HEK293 (cell line): ENCODE measurements at regions of chr1 and their contacts with region 1.

Region 1: DNA sequence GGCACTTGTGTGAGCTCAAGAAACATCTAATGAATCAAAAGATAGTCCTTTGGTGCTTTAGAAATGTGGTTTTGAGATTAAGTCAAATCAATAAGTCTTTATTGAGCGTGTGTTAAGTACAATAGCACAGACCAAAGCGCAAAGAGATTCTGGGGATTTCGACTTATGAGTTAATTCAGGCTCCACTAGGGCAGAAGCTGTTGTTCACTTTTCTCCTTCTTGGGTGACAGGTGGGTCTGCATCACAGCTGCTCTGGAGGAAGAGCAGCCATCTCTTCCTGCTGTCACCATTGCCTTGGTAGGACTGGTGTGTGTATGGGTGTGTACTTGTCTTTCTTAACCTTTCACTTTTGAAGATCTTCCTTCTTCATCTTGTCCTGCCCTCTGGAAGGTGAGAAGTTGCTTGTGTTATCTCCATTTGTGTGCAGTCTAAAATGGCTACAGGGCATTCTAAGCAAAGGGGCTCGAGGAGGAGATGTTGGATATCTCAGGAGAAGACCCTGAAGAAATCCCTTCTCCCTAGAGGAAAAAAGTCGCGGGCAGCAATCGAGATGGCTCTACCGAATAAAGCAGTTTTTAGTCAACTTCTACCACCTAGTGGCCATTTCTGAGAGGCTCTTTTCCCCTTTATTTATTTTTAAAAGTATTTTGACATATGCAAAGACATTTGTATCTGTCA is 22.9 kb upstream of the DISC1 start:
- H3K4me3 ChIP-seq: peak overlapping the region; percentile 42
- H3K27ac ChIP-seq: no peak overlapping the region; the same call in 1 of the 2 replicates
- H3K4me1 ChIP-seq: peaks cover 26% of the 10 kb centered on the region; the same call in 1 of the 2 replicates
- CTCF ChIP-seq: peak; percentile 54

Region 2: DNA sequence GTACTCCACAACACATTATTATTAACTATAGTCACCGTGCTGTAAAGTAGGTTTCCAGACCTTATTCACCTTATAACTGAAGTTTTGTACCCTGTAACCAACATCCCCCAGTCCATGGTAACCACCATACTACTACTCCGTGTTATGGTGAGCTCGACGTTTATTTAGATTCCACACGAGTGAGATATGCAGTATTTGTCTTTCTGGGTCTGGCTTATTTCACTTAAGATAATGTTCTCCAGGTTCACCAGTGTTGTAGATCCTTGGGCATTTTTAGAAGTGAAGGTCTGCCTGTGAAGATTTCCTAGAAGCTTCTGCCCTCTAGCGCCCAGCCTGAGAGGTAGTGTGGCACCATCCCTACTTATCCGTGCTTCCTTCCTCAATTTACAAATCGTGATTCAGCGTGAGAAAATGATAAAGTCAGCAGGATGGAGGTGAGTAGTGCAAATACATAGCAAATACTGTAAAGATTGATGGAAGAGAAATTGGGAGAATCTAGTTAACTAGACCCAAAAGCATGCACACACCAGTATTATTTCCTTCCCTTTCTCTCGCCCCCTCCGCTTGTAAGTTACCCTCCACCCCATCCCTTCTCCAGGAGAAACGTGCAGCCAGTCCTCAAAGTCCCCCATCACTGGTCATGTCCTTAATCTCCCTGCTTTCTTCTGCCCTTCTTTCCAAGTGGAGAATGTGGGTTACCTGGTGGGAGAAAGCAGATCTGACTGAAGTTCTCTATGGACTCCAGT is 13.1 kb before region 1 on chr1:
- CTCF ChIA-PET with region 1: interaction called, 50 read pairs
- POLR2A ChIA-PET with region 1: no interaction called
- H3K4me3 ChIP-seq: no peak overlapping the region
- H3K27ac ChIP-seq: no peak overlapping the region
- H3K4me1 ChIP-seq: no peaks in the 10 kb centered on the region
- CTCF ChIP-seq: peak; percentile 90